Dendritic cell treated with granulocyte-macrophage colony-stimulating factor and Interleukin-4, amounts not matched to agents 40 ng/mL and 50 ng/mL, for 4 days (primary cell): ENCODE measurements at regions of chr1 and their contacts with region 1.

Region 1: DNA sequence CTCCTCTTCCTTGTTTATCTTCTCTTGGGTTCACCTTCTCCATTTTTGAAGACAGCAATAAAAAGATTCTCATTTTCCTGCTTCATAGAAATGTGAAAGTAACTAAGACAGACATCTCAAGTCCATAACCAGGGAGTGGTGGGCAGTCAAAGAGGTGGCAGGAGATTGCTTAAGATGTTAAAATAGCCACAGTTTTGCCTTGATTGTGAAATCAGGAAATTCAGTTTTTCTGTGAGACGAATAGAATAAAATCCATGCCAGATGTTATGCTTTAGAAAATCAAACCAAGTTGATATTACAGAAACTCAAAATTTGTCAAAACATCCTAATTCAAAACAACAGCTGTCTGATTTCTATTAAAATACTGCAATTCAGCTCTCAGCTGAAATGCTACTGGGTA is 57.2 kb downstream of the TNN start:
- H3K4me3 Mint-ChIP-seq: no peak overlapping the region
- H3K27ac Mint-ChIP-seq: no peak overlapping the region
- H3K4me1 Mint-ChIP-seq: peaks cover 45% of the 10 kb centered on the region
- H3K27me3 Mint-ChIP-seq: no peaks in the 10 kb centered on the region

Region 2: GRCh38 chr1:175033953-175034352 is 90.9 kb before region 1 on chr1:
- intact Hi-C with region 1: loop called (anchors 1 kb)
- H3K4me3 Mint-ChIP-seq: no peak overlapping the region
- H3K27ac Mint-ChIP-seq: no peak overlapping the region
- H3K4me1 Mint-ChIP-seq: peaks cover 10% of the 10 kb centered on the region
- H3K27me3 Mint-ChIP-seq: no peaks in the 10 kb centered on the region

Region 3: GRCh38 chr1:175146529-175147213 is 21.8 kb after region 1 on chr1:
- intact Hi-C with region 1: no loop called
- H3K4me3 Mint-ChIP-seq: no peak overlapping the region
- H3K27ac Mint-ChIP-seq: no peak overlapping the region
- H3K4me1 Mint-ChIP-seq: no peaks in the 10 kb centered on the region
- H3K27me3 Mint-ChIP-seq: peaks cover 10% of the 10 kb centered on the region

Region 4: DNA sequence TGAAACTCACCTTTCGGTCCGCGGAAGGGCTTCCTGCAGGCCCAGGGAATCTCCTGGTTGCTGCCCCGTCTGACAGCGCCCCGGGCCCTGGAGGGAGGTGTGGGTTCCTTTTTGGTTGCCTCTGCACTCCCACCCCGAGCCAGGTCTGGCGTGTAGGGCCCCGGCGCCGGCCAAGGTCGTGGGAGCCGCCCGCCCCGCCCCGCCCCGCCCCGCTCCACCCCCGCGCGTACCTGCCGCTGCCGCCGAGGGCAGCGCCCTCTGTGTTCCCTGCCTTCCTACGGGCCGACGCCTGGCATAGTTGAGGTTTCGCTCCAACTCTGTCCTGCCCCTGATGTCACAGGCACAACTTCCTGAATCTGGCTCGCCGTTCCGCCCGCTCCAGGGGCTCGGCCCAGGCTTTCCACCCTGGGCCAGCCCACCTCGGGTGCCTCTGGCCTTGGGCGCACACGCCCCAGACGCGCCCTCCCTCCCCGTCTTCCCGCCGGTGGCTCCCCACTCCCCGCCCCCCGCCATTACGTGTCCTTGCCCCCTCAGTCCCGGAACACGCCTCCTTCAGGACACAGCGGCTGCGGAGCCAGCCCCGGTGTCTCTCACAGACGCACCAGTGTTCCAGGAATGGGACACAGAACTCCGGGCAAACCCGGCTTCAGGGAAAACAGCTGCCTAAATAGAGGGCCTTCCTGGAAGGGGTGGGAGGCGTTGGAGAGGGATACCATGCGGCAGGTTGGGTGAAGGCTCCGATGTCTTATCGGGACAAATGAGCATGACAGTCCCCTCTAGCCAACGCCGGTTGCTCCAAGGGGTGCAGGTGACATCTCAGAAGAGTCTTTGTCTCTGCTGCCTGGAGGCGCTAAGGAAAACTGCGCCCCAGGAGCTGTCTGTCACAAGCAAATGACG is 68.0 kb after region 1 on chr1 and contains the start of gene KIAA0040:
- intact Hi-C with region 1: no loop called
- H3K4me3 Mint-ChIP-seq: peak within 1 kb of the TSS; percentile 86
- H3K27ac Mint-ChIP-seq: peak within 1 kb of the TSS; percentile 83
- H3K4me1 Mint-ChIP-seq: peaks cover 81% of the 10 kb centered on the region
- H3K27me3 Mint-ChIP-seq: no peaks in the 10 kb centered on the region